ENCODE measurements at regions of chr18 and their contacts with region 1.

Region 1: DNA sequence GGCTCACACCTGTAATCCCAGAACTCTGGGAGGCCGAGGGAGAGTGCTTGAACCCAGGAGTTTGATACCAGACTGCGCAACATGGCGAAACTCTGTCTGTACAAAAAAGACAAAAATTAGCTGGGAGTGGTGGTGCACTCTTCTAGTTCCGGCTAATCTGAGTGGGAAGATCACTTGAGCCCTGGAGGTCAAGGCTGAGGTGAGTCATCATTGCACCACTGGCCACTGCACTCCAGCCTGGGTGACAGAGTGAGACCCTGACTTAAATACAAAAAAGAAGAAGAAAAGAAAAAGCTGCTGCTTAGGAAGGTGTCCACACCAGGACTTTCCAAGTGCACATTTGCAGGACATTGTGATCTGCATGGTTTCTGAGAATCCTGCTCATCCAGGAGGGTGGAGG is 16.4 kb downstream of the SKOR2 start:
- DNase-seq: no peak
- H3K4me3 ChIP-seq: no peak overlapping the region
- H3K27ac ChIP-seq: no peak overlapping the region
- H3K4me1 ChIP-seq: peaks cover 0 to 2% (median 0%) of the 10 kb centered on the region in 4 experiments; a peak in 2 of 7 replicates
- H3K27me3 ChIP-seq: no peaks in the 10 kb centered on the region
- CTCF ChIP-seq: no peak
- EP300 ChIP-seq: no peak
- POLR2A ChIP-seq: no peak
- RAD21 ChIP-seq: no peak

Region 2: GRCh38 chr18:47247036-47247832 is 12.1 kb after region 1 on chr18:
- CTCF ChIA-PET with region 1: interaction called, 10 read pairs
- POLR2A ChIA-PET with region 1: interaction called, 3 read pairs
- DNase-seq: peak in 1 of 2 experiments; percentile 83
- H3K4me3 ChIP-seq: peak overlapping the region; percentile 39 to 60 (median 47); a peak in 7 of 8 replicates
- H3K27ac ChIP-seq: no peak overlapping the region
- H3K4me1 ChIP-seq: peaks cover 9 to 23% (median 9%) of the 10 kb centered on the region in 4 experiments; a peak in 6 of 7 replicates
- H3K27me3 ChIP-seq: peaks cover 47 to 50% (median 49%) of the 10 kb centered on the region in 4 experiments
- CTCF ChIP-seq: peak; percentile 56 to 90 (median 70)
- EP300 ChIP-seq: no peak
- POLR2A ChIP-seq: no peak
- RAD21 ChIP-seq: peak; percentile 5 to 42; a peak in 2 of 4 replicates

Region 3: GRCh38 chr18:47381975-47382570 is 147.0 kb after region 1 on chr18:
- CTCF ChIA-PET with region 1: no interaction called
- POLR2A ChIA-PET with region 1: no interaction called
- DNase-seq: no peak
- H3K4me3 ChIP-seq: no peak overlapping the region
- H3K27ac ChIP-seq: no peak overlapping the region
- H3K4me1 ChIP-seq: no peaks in the 10 kb centered on the region
- H3K27me3 ChIP-seq: no peaks in the 10 kb centered on the region
- CTCF ChIP-seq: no peak
- EP300 ChIP-seq: no peak
- POLR2A ChIP-seq: no peak
- RAD21 ChIP-seq: no peak